Psoas muscle (tissue), 8 donors: ENCODE measurements at regions of chr10 and their contacts with region 1.

Region 1: DNA sequence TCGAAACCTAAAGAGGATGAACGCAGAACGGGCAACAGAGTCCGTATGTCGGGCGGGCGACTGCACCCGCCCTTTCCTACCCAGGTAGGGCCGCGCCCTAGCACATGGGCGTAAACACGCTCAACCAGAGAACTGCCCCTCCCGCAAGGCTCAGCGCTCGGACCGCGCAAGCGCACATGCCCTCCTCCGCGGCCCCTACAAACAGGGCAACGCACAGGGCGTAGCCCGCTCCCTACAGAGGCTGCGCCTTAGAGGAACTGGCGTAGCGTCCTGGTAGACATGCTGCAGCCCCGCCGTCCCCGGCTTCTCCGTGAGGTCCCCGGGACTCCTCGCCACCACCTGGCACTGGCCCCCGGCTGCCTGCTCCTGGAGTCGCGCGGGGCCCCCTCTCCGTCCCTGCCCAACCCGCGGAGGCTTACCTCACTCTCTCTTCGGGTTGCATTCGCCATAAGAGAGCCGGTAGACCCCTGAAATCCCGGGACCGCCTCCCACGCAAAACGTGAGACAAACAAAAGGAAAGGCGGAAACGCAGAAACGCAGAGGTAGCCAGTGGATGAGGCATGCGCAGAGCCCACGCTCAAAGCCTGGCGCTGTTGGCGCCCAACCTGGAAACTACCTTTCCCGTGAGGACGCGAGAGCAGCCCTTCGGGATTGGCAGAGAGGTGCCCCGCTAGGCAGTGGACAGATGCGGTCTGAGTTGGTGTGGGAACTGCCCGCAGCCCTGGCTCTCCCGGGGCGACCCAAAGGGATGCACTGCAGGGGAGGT is at the start of gene ZNF33B:
- DNase-seq: peak; percentile 91 to 97
- ATAC-seq: peak; percentile 97 to 99 (median 98)
- H3K4me3 ChIP-seq: peak within 1 kb of the TSS; percentile 93
- H3K27ac ChIP-seq: peak within 1 kb of the TSS; percentile 89
- H3K4me1 ChIP-seq: peaks cover 9% of the 10 kb centered on the region
- H3K27me3 ChIP-seq: no peaks in the 10 kb centered on the region
- CTCF ChIP-seq: no peak
- total RNA-seq, gene ZNF33B: 5.1 to 10.6 (median 6.6) TPM

Region 2: GRCh38 chr10:42552493-42553407 is 85.5 kb before region 1 on chr10:
- intact Hi-C with region 1: loop called (anchors 5 kb)
- DNase-seq: peak; percentile 95 to 97
- ATAC-seq: peak; percentile 98 to 100 (median 100)
- H3K4me3 ChIP-seq: peak overlapping the region; percentile 92
- H3K27ac ChIP-seq: peak overlapping the region; percentile 72
- H3K4me1 ChIP-seq: peaks cover 11% of the 10 kb centered on the region
- H3K27me3 ChIP-seq: no peaks in the 10 kb centered on the region
- CTCF ChIP-seq: no peak

Region 3: DNA sequence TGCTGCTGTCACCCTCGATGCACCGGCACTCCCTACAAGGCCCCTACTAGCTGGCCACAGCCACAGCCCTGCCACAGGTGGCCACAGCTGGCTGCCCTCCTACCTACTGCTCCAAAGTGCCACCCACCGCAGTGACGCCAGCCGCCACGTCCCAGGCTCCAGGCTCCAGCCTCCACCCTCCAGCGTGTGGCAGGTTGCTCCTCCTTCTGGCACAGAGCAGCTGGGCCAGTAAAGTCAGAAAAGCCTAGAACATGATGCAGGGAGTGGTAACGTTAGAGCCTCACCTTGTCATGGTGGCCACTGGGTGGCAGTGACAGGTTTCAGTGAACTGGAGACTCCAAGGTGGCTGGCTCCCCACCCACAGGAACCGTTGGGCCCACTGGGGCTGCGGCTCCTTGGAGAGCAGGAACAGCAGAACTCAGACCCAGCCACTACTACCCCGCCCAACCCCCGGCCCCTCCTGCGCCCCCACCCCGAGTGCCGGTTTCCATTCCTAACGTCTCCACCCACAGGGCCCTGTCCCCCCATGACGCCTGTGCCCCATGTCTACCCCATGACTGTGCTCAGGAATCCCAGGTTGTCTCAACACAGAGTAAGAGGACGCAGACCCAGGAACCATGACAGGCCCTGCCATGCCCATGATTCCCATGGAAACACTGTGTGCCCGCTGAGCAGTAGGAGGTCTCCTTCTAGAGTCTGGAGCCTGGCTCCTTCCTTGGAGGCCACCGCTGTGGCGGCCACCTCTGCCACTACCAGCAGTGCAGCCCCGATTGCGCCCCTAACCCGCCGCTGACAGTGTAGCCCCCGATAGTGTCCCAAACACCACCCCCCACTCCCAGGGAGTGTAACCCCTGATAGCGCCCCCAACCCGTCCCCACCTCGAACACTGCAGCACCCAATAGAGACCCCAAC is 52.5 kb after region 1 on chr10:
- intact Hi-C with region 1: no loop called
- DNase-seq: no peak
- ATAC-seq: no peak
- H3K4me3 ChIP-seq: no peak overlapping the region
- H3K27ac ChIP-seq: no peak overlapping the region
- H3K4me1 ChIP-seq: no peaks in the 10 kb centered on the region
- H3K27me3 ChIP-seq: no peaks in the 10 kb centered on the region
- CTCF ChIP-seq: no peak